BJ (cell line): ENCODE measurements at regions of chr10 and their contacts with region 1.

Region 1: GRCh38 chr10:63206997-63207811 is 74.1 kb downstream of the NRBF2 start:
- DNase-seq: peak; percentile 51
- H3K4me3 ChIP-seq: no peak overlapping the region
- H3K27me3 ChIP-seq: no peaks in the 10 kb centered on the region
- CTCF ChIP-seq: no peak

Region 2: GRCh38 chr10:63236113-63236935 is 29.1 kb after region 1 on chr10:
- CTCF ChIA-PET with region 1: no interaction called
- POLR2A ChIA-PET with region 1: interaction called, 12 read pairs
- DNase-seq: peak; percentile 89
- H3K4me3 ChIP-seq: no peak overlapping the region
- H3K27me3 ChIP-seq: no peaks in the 10 kb centered on the region
- CTCF ChIP-seq: no peak

Region 3: DNA sequence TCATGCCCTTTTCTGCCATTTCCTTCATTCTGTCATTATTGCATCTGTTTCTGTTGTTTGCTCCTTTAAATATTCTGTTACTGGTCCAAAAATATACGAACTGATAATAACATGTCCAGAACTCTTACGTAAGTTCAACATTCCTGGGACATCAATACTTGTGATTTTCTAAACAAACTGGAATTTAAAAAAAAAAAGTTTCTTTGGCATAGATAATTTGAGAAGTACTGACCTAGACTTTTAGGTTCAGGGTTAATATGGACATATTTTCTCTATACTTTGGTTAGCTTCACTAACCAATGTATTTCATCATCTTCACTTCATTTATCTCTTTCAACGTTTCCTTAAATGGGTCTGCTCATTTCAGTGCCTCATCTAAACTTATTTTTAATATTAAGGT is 111.3 kb after region 1 on chr10:
- CTCF ChIA-PET with region 1: no interaction called
- POLR2A ChIA-PET with region 1: no interaction called
- DNase-seq: no peak
- H3K4me3 ChIP-seq: no peak overlapping the region
- H3K27me3 ChIP-seq: no peaks in the 10 kb centered on the region
- CTCF ChIP-seq: no peak